ENCODE measurements at regions of chr6 and their contacts with region 1.

Region 1: GRCh38 chr6:79777713-79778579 is 146.8 kb downstream of the SH3BGRL2 start:
- DNase-seq: peak; percentile 79
- ATAC-seq: peak; percentile 95
- H3K4me3 Mint-ChIP-seq: peak overlapping the region; percentile 79
- H3K27ac Mint-ChIP-seq: peak overlapping the region; percentile 38
- H3K4me1 Mint-ChIP-seq: peaks cover 8% of the 10 kb centered on the region
- H3K27me3 Mint-ChIP-seq: no peaks in the 10 kb centered on the region
- CTCF ChIP-seq: peak; percentile 78

Region 2: GRCh38 chr6:79078075-79079025 is 699.6 kb before region 1 on chr6 and contains the start of gene PHIP:
- CTCF ChIA-PET with region 1: no interaction called
- POLR2A ChIA-PET with region 1: no interaction called
- intact Hi-C with region 1: loop called (anchors 2 kb)
- DNase-seq: peak; percentile 93
- ATAC-seq: peak; percentile 73
- H3K4me3 Mint-ChIP-seq: peak within 1 kb of the TSS; percentile 87
- H3K27ac Mint-ChIP-seq: peak within 1 kb of the TSS; percentile 96
- H3K4me1 Mint-ChIP-seq: peaks cover 43% of the 10 kb centered on the region
- H3K27me3 Mint-ChIP-seq: peaks cover 3% of the 10 kb centered on the region
- CTCF ChIP-seq: no peak
- total RNA-seq, gene PHIP: 27.7 and 32.3 TPM in 2 replicates

Region 3: GRCh38 chr6:79536954-79537747 is 240.8 kb before region 1 on chr6 and contains the start of gene LCA5:
- CTCF ChIA-PET with region 1: no interaction called
- POLR2A ChIA-PET with region 1: no interaction called
- intact Hi-C with region 1: loop called (anchors 5 kb)
- DNase-seq: peak; percentile 73
- ATAC-seq: peak; percentile 98
- H3K4me3 Mint-ChIP-seq: no peak within 1 kb of the TSS
- H3K27ac Mint-ChIP-seq: no peak within 1 kb of the TSS
- H3K4me1 Mint-ChIP-seq: no peaks in the 10 kb centered on the region
- H3K27me3 Mint-ChIP-seq: no peaks in the 10 kb centered on the region
- CTCF ChIP-seq: no peak
- total RNA-seq, gene LCA5: 0.17 and 0.18 TPM in 2 replicates

Region 4: GRCh38 chr6:79869600-79870084 is 91.7 kb after region 1 on chr6:
- CTCF ChIA-PET with region 1: interaction called, 3 read pairs
- POLR2A ChIA-PET with region 1: no interaction called
- intact Hi-C with region 1: loop called (anchors 1 kb)
- DNase-seq: peak; percentile 65
- ATAC-seq: peak; percentile 100
- H3K4me3 Mint-ChIP-seq: peak overlapping the region; percentile 65
- H3K27ac Mint-ChIP-seq: no peak overlapping the region
- H3K4me1 Mint-ChIP-seq: peaks cover 10% of the 10 kb centered on the region
- H3K27me3 Mint-ChIP-seq: peaks cover 4% of the 10 kb centered on the region
- CTCF ChIP-seq: peak; percentile 71

Region 5: DNA sequence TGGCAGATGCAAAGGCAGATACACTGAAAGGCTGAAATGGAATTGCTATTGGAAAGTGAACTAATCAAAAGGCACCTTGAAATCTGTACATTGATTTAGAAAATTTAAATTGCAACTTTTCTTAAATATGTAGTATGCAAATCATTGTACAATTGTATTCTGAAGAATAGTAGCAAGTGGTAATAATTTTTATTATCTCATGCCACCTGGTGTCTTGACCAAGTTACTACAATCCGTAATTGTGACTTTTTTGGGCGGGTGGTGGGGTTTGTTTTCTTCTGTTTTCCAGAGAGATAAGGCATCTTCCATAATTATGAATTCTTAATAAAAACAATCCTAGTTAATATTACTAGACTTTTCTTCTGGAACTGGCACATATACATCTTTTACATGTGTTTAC is 316.1 kb after region 1 on chr6:
- CTCF ChIA-PET with region 1: no interaction called
- POLR2A ChIA-PET with region 1: no interaction called
- intact Hi-C with region 1: loop called (anchors 1 kb)
- DNase-seq: no peak
- ATAC-seq: peak; percentile 45
- H3K4me3 Mint-ChIP-seq: no peak overlapping the region
- H3K27ac Mint-ChIP-seq: no peak overlapping the region
- H3K4me1 Mint-ChIP-seq: peaks cover 3% of the 10 kb centered on the region
- H3K27me3 Mint-ChIP-seq: peaks cover 4% of the 10 kb centered on the region
- CTCF ChIP-seq: no peak

Region 6: DNA sequence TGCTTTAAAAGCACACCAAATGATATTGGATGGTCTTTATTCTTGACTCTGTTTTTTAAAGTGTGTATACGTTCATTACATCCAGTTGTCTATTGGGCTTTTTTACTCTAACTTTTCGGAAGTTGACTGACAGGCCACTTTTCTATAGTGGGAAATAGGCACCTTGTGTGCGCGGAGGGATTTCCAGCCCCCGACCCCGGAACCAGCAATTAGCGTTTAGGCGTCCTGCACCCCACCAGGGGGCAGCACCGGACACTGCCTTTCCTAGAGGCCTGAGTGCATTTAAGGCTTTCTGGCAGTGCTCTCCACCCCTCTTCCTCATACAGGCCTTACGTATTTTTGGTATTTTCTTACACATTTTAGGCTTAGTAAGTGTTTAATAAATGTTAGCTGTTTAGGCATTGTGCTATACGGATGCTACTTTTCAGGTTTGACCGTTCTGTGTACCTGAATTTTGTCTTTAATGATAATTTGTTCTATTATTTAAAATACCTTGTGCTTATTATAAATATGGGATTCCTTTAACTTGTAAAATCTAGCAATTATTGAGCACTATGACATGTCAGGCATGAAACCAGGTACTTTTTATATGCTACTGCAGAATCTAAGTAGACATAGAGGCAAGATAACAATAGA is 560.4 kb after region 1 on chr6:
- CTCF ChIA-PET with region 1: no interaction called
- POLR2A ChIA-PET with region 1: no interaction called
- intact Hi-C with region 1: loop called (anchors 2 kb)
- DNase-seq: peak; percentile 58
- ATAC-seq: peak; percentile 76
- H3K4me3 Mint-ChIP-seq: no peak overlapping the region
- H3K27ac Mint-ChIP-seq: no peak overlapping the region
- H3K4me1 Mint-ChIP-seq: peaks cover 4% of the 10 kb centered on the region
- H3K27me3 Mint-ChIP-seq: no peaks in the 10 kb centered on the region
- CTCF ChIP-seq: peak; percentile 79